ENCODE measurements at regions of chr2 and their contacts with region 1.

Region 1: GRCh38 chr2:205734436-205735037 is 52.2 kb downstream of the NRP2 start:
- DNase-seq: no peak
- H3K4me3 ChIP-seq: no peak overlapping the region
- H3K27me3 ChIP-seq: no peaks in the 10 kb centered on the region
- CTCF ChIP-seq: no peak

Region 2: GRCh38 chr2:205721057-205721449 is 13.5 kb before region 1 on chr2:
- CTCF ChIA-PET with region 1: interaction called, 10 read pairs
- POLR2A ChIA-PET with region 1: no interaction called
- DNase-seq: no peak
- H3K4me3 ChIP-seq: no peak overlapping the region
- H3K27me3 ChIP-seq: no peaks in the 10 kb centered on the region
- CTCF ChIP-seq: peak; percentile 30; the same call in 1 of the 2 replicates

Region 3: GRCh38 chr2:205746420-205746785 is 11.9 kb after region 1 on chr2:
- CTCF ChIA-PET with region 1: interaction called, 10 read pairs
- POLR2A ChIA-PET with region 1: no interaction called
- DNase-seq: no peak
- H3K4me3 ChIP-seq: no peak overlapping the region
- H3K27me3 ChIP-seq: no peaks in the 10 kb centered on the region
- CTCF ChIP-seq: no peak

Region 4: GRCh38 chr2:205885492-205886099 is 151.1 kb after region 1 on chr2:
- CTCF ChIA-PET with region 1: no interaction called
- POLR2A ChIA-PET with region 1: no interaction called
- DNase-seq: no peak
- H3K4me3 ChIP-seq: no peak overlapping the region
- H3K27me3 ChIP-seq: peaks cover 2% of the 10 kb centered on the region; the same call in 1 of the 2 replicates
- CTCF ChIP-seq: peak; percentile 91